K562 (cell line): ENCODE measurements at regions of chr22 and their contacts with region 1.

Region 1: DNA sequence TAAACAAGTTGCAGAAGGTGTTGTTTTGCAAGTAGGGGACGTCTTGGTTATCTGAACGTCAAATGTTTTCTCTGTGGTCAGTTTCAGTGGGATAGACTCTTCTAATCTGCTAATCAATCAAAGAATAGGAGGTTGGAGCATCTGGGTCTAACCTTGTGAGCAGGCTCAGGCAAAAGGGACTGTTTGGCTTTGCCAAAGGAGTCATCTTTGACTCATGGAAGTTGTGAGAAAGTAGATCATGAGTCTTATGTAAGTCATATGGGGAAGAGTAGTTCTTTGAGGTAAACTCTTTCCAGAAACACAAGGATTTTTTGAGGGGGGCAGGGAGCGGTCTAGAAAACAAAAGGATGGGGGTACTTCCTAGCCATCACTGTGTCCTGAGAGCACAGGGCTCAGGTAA is 27.1 kb upstream of the TOP3B start:
- DNase-seq: no peak
- ATAC-seq: peak; percentile 4; the same call in 2 of the 3 replicates
- H3K4me3 ChIP-seq: no peak overlapping the region
- H3K27ac ChIP-seq: no peak overlapping the region
- H3K4me1 ChIP-seq: no peaks in the 10 kb centered on the region
- H3K27me3 ChIP-seq: peaks cover 33 to 57% of the 10 kb centered on the region in 2 experiments
- CTCF ChIP-seq: no peak
- EP300 ChIP-seq: no peak
- POLR2A ChIP-seq: no peak
- RAD21 ChIP-seq: no peak

Region 2: GRCh38 chr22:21996175-21996720 is 13.4 kb before region 1 on chr22:
- CTCF ChIA-PET with region 1: interaction called, 3 read pairs
- POLR2A ChIA-PET with region 1: interaction called, 176 read pairs
- in situ Hi-C with region 1: no loop called
- intact Hi-C with region 1: no loop called
- DNase-seq: no peak
- ATAC-seq: no peak
- H3K4me3 ChIP-seq: no peak overlapping the region
- H3K27ac ChIP-seq: no peak overlapping the region
- H3K4me1 ChIP-seq: peaks cover 9 to 22% of the 10 kb centered on the region in 2 experiments
- H3K27me3 ChIP-seq: no peaks in the 10 kb centered on the region
- CTCF ChIP-seq: no peak
- EP300 ChIP-seq: no peak
- POLR2A ChIP-seq: no peak
- RAD21 ChIP-seq: no peak

Region 3: GRCh38 chr22:22025320-22026156 is 15.9 kb after region 1 on chr22:
- CTCF ChIA-PET with region 1: no interaction called
- POLR2A ChIA-PET with region 1: interaction called, 123 read pairs
- in situ Hi-C with region 1: no loop called
- intact Hi-C with region 1: no loop called
- DNase-seq: peak in 1 of 4 experiments; percentile 58
- ATAC-seq: peak; percentile 7; the same call in 2 of the 3 replicates
- H3K4me3 ChIP-seq: no peak overlapping the region
- H3K27ac ChIP-seq: no peak overlapping the region
- H3K4me1 ChIP-seq: peaks cover 15 to 20% of the 10 kb centered on the region in 2 experiments; a peak in 4 of 5 replicates
- H3K27me3 ChIP-seq: peaks cover 6 to 23% of the 10 kb centered on the region in 2 experiments; a peak in 2 of 5 replicates
- CTCF ChIP-seq: no peak
- EP300 ChIP-seq: no peak
- POLR2A ChIP-seq: no peak
- RAD21 ChIP-seq: no peak